ENCODE measurements at regions of chr22 and their contacts with region 1.

Region 1: DNA sequence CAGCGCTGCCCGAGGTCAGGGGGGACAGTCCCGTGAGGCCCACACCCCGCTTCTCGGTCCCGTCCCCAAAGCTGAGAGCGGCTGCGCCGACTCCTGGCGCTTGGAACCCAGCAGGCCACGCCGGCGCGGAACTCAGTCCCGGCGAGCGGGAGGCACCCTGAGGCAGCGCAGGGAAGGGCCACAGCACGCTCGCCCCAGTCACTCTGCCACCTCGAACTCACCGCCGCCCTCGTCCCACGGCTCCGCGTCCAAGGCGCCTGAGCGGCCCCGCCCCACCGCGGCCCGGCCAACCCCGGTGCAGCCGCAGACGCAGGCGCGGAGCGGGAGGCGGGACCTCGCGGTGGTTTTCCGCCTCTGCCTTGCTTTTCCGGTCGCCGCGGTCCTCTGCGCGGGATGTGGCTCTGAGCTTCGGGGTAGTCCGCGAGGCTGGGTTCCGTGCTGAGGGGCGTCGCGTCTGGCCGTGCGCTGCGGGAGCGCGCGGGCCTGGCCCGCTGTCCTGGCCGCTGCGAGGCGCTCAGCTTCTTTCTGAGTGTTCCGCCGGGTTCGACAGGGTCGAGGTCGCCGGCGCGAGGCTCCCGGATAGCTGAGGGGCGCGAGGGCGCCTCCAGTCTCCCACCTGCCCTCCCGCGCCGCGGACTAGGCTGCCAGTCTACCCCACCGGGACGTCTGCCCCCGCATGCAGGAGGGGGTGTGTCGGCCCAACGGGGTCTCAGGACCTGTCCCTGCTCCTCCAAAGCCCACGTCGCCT is at the start of gene CDPF1:
- DNase-seq: peak; percentile 93
- ATAC-seq: peak; percentile 92
- H3K4me3 Mint-ChIP-seq: peak within 1 kb of the TSS; percentile 85
- H3K27ac Mint-ChIP-seq: peak within 1 kb of the TSS; percentile 86
- H3K4me1 Mint-ChIP-seq: peaks cover 21% of the 10 kb centered on the region
- H3K27me3 Mint-ChIP-seq: no peaks in the 10 kb centered on the region
- total RNA-seq, gene CDPF1: 11.2 to 13.6 TPM

Region 2: GRCh38 chr22:46150034-46150654 is 100.1 kb before region 1 on chr22 and contains the start of gene PPARA:
- POLR2A ChIA-PET with region 1: interaction called, 10 read pairs
- DNase-seq: peak; percentile 94
- ATAC-seq: peak; percentile 79
- H3K4me3 Mint-ChIP-seq: peak within 1 kb of the TSS; percentile 81
- H3K27ac Mint-ChIP-seq: peak within 1 kb of the TSS; percentile 71
- H3K4me1 Mint-ChIP-seq: peaks cover 19% of the 10 kb centered on the region
- H3K27me3 Mint-ChIP-seq: peaks cover 28% of the 10 kb centered on the region
- total RNA-seq, gene PPARA: 20.7 to 24.9 TPM

Region 3: DNA sequence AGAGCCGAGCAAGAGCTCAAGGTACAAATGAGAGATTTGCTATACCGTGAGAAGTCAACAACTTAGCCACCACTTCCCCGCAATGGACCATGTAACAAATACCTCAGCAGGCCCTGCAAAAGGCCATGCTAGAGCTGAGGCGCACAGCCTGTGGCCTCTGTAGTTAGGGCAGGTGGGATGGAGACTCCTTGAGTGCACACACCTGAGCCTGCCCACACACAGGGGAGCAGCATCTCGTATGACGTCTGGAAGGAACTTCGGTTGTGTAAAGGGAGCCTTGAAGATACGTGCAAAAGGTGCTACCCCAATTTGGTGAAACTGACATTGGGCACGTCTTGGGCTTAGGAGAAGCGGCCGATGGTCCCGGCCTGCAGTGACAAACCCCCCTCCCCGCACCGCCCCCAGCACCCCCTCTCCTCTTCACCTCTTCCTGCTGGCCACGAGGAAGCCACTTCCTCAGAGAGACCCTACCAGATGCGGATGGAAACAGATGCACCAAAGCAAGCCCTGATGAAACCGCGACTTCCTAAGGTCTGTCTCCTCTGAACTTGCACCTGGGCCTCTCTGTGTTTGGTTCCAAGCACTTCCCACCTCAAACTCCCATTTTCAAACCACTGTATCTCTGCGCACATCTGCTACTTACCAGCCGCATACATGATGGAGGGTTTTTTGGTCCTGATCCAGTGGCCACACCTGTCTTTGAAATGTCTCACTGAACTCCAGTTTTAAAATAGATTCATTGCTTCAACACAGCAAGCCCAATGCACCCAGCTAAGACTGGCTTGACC is 10.8 kb before region 1 on chr22:
- POLR2A ChIA-PET with region 1: interaction called, 11 read pairs
- DNase-seq: peak; percentile 45
- ATAC-seq: peak; percentile 74
- H3K4me3 Mint-ChIP-seq: peak overlapping the region; percentile 64
- H3K27ac Mint-ChIP-seq: peak overlapping the region; percentile 69
- H3K4me1 Mint-ChIP-seq: peaks cover 21% of the 10 kb centered on the region
- H3K27me3 Mint-ChIP-seq: no peaks in the 10 kb centered on the region

Region 4: DNA sequence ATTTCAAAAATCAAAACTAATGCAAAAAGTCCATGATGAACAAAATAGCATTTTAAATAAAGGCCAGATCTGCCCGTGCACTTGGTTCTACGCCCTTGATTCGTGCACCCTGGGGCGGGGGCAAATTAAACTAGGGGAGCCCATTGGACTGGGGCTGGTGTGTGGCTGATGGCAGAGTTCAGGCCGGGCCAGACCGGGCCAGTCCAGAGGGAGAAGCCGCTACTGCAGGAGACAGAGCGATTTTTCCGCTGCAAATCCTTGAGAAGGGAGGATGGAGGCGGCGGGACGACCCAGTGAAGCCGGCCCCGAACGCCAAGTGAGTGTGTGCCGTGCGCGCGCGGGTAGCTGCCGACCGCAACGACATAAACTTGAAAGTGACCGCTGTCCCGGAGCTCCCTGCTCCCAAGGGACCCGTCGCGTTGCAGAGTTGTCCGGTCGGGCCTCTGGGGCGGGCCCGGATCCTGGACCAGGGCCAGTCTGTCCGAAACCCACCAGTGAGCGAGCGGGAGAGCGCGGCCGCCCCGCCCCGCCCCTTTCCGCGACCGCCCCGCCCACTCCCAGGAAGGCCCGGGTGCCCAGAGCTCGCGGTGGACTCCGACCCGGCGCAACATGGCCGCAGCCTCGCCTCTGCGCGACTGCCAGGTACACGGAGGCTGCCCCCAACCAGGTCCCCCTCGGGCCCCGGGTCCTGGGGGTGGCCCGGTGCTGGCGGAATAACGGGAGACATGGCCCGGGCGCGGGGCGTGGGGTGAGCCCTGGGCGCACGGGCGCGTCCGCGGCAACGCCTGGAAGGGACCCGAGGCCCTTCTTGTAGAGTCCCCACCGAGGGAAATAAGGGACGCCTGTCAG is 17.4 kb after region 1 on chr22 and contains the start of gene TTC38:
- POLR2A ChIA-PET with region 1: interaction called, 11 read pairs
- DNase-seq: peak; percentile 76
- ATAC-seq: peak; percentile 87
- H3K4me3 Mint-ChIP-seq: peak within 1 kb of the TSS; percentile 92
- H3K27ac Mint-ChIP-seq: peak within 1 kb of the TSS; percentile 83
- H3K4me1 Mint-ChIP-seq: peaks cover 17% of the 10 kb centered on the region
- H3K27me3 Mint-ChIP-seq: peaks cover 28% of the 10 kb centered on the region
- total RNA-seq, gene TTC38: 24.3 to 25.0 TPM

Region 5: DNA sequence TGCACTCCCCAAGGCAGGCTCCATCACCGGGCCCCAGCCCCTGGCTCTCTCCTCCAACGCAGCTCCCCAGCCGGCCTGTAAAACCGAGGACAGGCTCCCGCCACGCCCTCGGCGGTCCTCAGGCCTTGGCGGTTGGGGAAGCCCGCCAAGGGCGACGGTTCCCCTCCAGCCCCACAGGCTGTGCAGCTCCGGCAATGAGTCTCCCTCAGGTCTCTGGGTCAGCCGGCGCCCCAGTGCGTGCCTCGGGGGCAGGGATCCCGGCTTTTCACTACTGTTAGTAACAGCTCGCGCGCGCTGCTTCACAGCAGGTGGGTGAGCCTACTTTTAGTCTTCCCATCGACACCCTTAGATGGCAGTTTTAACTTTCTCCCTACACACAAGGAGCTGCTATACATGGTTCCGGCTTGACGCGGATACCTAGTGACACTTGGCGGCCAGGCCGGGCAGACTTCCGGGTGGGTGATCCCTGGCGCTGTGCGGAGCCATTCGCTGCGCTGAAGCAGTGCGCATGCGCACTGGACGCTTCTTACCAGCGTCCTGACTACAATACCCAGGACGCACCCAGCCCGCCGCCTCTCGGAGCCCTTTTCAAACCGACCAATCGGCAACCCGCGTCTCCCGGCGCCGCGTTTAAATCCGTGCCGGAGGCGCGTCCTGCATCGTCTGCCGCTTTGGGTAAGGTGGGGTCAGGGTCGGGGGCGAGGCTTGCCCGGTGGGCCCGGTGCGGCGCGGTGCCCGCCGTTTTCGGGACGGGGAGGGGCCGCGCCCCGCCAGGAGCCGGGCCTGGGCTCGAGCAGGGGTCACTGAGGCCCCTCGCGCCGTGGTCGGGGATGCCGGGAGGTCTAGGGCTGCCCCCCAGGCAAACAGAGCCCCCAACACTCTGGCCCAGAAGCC is 46.3 kb after region 1 on chr22 and contains the start of gene GTSE1:
- POLR2A ChIA-PET with region 1: interaction called, 12 read pairs
- DNase-seq: peak; percentile 96
- ATAC-seq: peak; percentile 96
- H3K4me3 Mint-ChIP-seq: peak within 1 kb of the TSS; percentile 87
- H3K27ac Mint-ChIP-seq: peak within 1 kb of the TSS; percentile 97
- H3K4me1 Mint-ChIP-seq: peaks cover 56% of the 10 kb centered on the region
- H3K27me3 Mint-ChIP-seq: no peaks in the 10 kb centered on the region
- total RNA-seq, gene GTSE1: 64.9 to 73.8 TPM

Region 6: GRCh38 chr22:46309526-46310085 is 59.4 kb after region 1 on chr22:
- POLR2A ChIA-PET with region 1: no interaction called
- DNase-seq: no peak
- ATAC-seq: no peak
- H3K4me3 Mint-ChIP-seq: no peak overlapping the region
- H3K27ac Mint-ChIP-seq: peak overlapping the region; percentile 49
- H3K4me1 Mint-ChIP-seq: peaks cover 10% of the 10 kb centered on the region
- H3K27me3 Mint-ChIP-seq: no peaks in the 10 kb centered on the region

Region 7: GRCh38 chr22:46335201-46336118 is 85.3 kb after region 1 on chr22 and contains the start of gene TRMU:
- POLR2A ChIA-PET with region 1: interaction called, 10 read pairs
- DNase-seq: peak; percentile 84
- ATAC-seq: peak; percentile 84
- H3K4me3 Mint-ChIP-seq: peak within 1 kb of the TSS; percentile 95
- H3K27ac Mint-ChIP-seq: peak within 1 kb of the TSS; percentile 96
- H3K4me1 Mint-ChIP-seq: peaks cover 22% of the 10 kb centered on the region
- H3K27me3 Mint-ChIP-seq: no peaks in the 10 kb centered on the region
- total RNA-seq, gene TRMU: 76.3 to 86.4 TPM